CD4-positive, alpha-beta T cell (primary cell): ENCODE measurements at regions of chr22 and their contacts with region 1.

Region 1: DNA sequence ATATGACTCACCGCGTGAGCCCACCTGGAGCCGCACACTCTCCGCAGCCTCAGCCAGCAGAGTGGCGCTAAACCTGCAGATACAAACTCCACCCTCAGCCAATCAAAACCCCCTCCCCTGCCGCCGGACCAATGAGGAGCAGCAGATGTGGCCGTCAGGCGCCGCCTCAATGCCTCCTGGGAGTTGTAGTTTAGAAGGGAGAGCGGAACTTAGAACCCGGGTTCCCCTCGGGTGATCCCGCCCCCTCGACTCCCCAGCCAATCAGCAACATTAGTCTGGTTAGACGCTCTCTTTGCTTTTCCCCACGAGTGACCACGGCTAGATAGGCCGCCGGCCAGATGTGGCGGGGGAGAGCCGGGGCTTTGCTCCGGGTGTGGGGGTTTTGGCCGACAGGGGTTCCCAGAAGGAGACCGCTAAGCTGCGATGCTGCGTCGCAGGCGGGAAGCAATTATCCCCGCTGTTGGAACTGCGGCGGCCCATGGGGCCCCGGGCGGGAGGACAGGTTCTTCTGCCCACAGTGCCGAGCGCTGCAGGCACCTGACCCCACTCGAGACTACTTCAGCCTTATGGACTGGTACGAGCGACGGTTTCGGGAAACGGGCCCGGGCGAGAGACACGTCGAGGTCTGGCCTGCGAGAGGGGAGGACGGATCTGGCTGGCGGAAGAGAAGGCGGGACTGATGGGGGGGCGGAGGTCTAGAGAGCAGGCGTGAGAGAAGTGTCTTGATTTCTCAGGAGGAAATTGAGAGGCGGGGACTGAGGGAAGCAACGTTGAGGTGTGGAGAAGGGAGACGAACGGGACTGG is at the starts of genes CHEK2 and HSCB:
- DNase-seq: peak; percentile 90 to 99 (median 96)
- ATAC-seq: peak; percentile 93
- H3K4me3 ChIP-seq: peak within 1 kb of the TSS; percentile 98
- H3K4me3 Mint-ChIP-seq: peak within 1 kb of the TSS; percentile 98
- H3K27ac ChIP-seq: peak within 1 kb of the TSS; percentile 96
- H3K27ac Mint-ChIP-seq: peak within 1 kb of the TSS; percentile 94
- H3K4me1 ChIP-seq: peaks cover 21% of the 10 kb centered on the region
- H3K4me1 Mint-ChIP-seq: peaks cover 34% of the 10 kb centered on the region
- H3K27me3 ChIP-seq: no peaks in the 10 kb centered on the region
- H3K27me3 Mint-ChIP-seq: no peaks in the 10 kb centered on the region
- CTCF ChIP-seq: no peak
- total RNA-seq, gene CHEK2: 2.6 to 4.0 TPM
- total RNA-seq, gene HSCB: 3.4 to 3.7 TPM

Region 2: GRCh38 chr22:28772633-28773460 is 30.9 kb after region 1 on chr22 and contains the start of gene CCDC117:
- CTCF ChIA-PET with region 1: interaction called, 3 read pairs
- POLR2A ChIA-PET with region 1: interaction called, 18 read pairs
- intact Hi-C with region 1: loop called (anchors 1 kb)
- DNase-seq: peak; percentile 85 to 97 (median 91)
- ATAC-seq: peak; percentile 97
- H3K4me3 ChIP-seq: peak within 1 kb of the TSS; percentile 83
- H3K4me3 Mint-ChIP-seq: peak within 1 kb of the TSS; percentile 95
- H3K27ac ChIP-seq: peak within 1 kb of the TSS; percentile 61 to 73
- H3K27ac Mint-ChIP-seq: peak within 1 kb of the TSS; percentile 88
- H3K4me1 ChIP-seq: peaks cover 34% of the 10 kb centered on the region
- H3K4me1 Mint-ChIP-seq: peaks cover 27% of the 10 kb centered on the region
- H3K27me3 ChIP-seq: no peaks in the 10 kb centered on the region
- H3K27me3 Mint-ChIP-seq: no peaks in the 10 kb centered on the region
- CTCF ChIP-seq: no peak
- total RNA-seq, gene CCDC117: 14.2 to 16.1 TPM

Region 3: GRCh38 chr22:28829358-28830181 is 87.6 kb after region 1 on chr22:
- CTCF ChIA-PET with region 1: no interaction called
- POLR2A ChIA-PET with region 1: no interaction called
- intact Hi-C with region 1: loop called in 1 of 2 experiments (anchors 1 kb)
- DNase-seq: peak; percentile 56 to 88 (median 70)
- ATAC-seq: peak; percentile 87
- H3K4me3 ChIP-seq: no peak overlapping the region
- H3K4me3 Mint-ChIP-seq: peak overlapping the region; percentile 22
- H3K27ac ChIP-seq: no peak overlapping the region
- H3K27ac Mint-ChIP-seq: no peak overlapping the region
- H3K4me1 ChIP-seq: peaks cover 8% of the 10 kb centered on the region
- H3K4me1 Mint-ChIP-seq: peaks cover 17% of the 10 kb centered on the region
- H3K27me3 ChIP-seq: no peaks in the 10 kb centered on the region
- H3K27me3 Mint-ChIP-seq: no peaks in the 10 kb centered on the region
- CTCF ChIP-seq: peak; percentile 100

Region 4: GRCh38 chr22:28882878-28883656 is 141.1 kb after region 1 on chr22 and contains the start of gene ZNRF3:
- CTCF ChIA-PET with region 1: no interaction called
- POLR2A ChIA-PET with region 1: interaction called, 4 read pairs
- intact Hi-C with region 1: loop called in 1 of 2 experiments (anchors 1 kb)
- DNase-seq: peak; percentile 86 to 96 (median 92)
- ATAC-seq: peak; percentile 87
- H3K4me3 ChIP-seq: peak within 1 kb of the TSS; percentile 82
- H3K4me3 Mint-ChIP-seq: peak within 1 kb of the TSS; percentile 94
- H3K27ac ChIP-seq: no peak within 1 kb of the TSS
- H3K27ac Mint-ChIP-seq: peak within 1 kb of the TSS; percentile 74
- H3K4me1 ChIP-seq: peaks cover 16% of the 10 kb centered on the region
- H3K4me1 Mint-ChIP-seq: peaks cover 23% of the 10 kb centered on the region
- H3K27me3 ChIP-seq: peaks cover 4 to 7% of the 10 kb centered on the region in 2 experiments
- H3K27me3 Mint-ChIP-seq: peaks cover 23% of the 10 kb centered on the region
- CTCF ChIP-seq: no peak
- total RNA-seq, gene ZNRF3: 0.38 to 0.61 TPM

Region 5: DNA sequence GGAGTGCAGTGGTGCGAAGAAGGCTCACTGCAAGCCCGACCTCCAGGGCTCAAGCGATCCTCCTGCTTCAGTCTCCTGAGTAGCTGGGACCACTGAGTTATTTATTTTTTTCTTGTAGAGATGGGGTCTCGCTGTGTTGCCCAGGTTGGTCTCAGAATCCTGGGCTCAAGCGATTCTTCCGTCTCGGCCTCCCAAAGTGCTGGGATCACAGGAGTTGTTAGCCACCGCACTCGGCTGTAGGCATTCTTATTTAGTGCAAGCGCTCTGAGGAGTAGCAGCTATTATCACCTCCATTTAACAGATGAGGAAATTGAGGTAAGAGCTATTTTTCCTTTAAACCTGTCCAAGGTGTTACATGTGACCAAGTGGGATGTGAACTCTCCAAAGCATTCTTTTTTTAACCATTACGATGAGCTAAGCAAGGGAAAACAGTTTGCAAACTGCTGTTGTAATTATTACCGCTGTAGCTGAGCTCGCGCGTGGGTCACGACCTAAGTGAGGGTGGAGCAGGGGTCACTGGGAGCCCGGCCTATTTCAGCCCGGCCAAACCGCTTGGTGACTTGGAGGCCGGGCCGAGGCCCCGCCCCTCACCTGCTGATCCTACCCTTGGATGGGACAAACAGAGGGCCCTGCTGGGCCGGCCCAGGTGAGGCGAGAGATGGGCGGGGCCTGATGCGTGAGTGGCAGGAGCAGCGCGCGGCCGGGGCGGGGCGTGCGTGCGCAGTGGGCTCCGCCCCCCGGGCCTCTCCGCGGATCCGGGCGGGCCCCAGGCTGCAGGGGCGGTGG is 330.4 kb after region 1 on chr22:
- CTCF ChIA-PET with region 1: no interaction called
- POLR2A ChIA-PET with region 1: no interaction called
- intact Hi-C with region 1: loop called in 1 of 2 experiments (anchors 5 kb)
- DNase-seq: peak; percentile 67 to 92 (median 76)
- ATAC-seq: peak; percentile 97
- H3K4me3 ChIP-seq: peak overlapping the region; percentile 49
- H3K4me3 Mint-ChIP-seq: peak overlapping the region; percentile 83
- H3K27ac ChIP-seq: no peak overlapping the region
- H3K27ac Mint-ChIP-seq: no peak overlapping the region
- H3K4me1 ChIP-seq: peaks cover 33% of the 10 kb centered on the region
- H3K4me1 Mint-ChIP-seq: peaks cover 28% of the 10 kb centered on the region
- H3K27me3 ChIP-seq: peaks cover 39 to 44% of the 10 kb centered on the region in 2 experiments
- H3K27me3 Mint-ChIP-seq: peaks cover 57% of the 10 kb centered on the region
- CTCF ChIP-seq: no peak

Region 6: GRCh38 chr22:29553351-29554224 is 811.6 kb after region 1 on chr22 and contains the start of gene THOC5:
- CTCF ChIA-PET with region 1: no interaction called
- POLR2A ChIA-PET with region 1: no interaction called
- intact Hi-C with region 1: no loop called
- DNase-seq: peak; percentile 80 to 93 (median 86)
- ATAC-seq: peak; percentile 93
- H3K4me3 ChIP-seq: peak within 1 kb of the TSS; percentile 83
- H3K4me3 Mint-ChIP-seq: peak within 1 kb of the TSS; percentile 95
- H3K27ac ChIP-seq: peak within 1 kb of the TSS; percentile 54 to 84
- H3K27ac Mint-ChIP-seq: peak within 1 kb of the TSS; percentile 94
- H3K4me1 ChIP-seq: peaks cover 22% of the 10 kb centered on the region
- H3K4me1 Mint-ChIP-seq: peaks cover 15% of the 10 kb centered on the region
- H3K27me3 ChIP-seq: no peaks in the 10 kb centered on the region
- H3K27me3 Mint-ChIP-seq: no peaks in the 10 kb centered on the region
- CTCF ChIP-seq: no peak
- total RNA-seq, gene THOC5: 27.1 to 32.9 TPM